Mammary epithelial cell (primary cell): ENCODE measurements at regions of chr9 and their contacts with region 1.

Region 1: GRCh38 chr9:114968671-114969070 is 38.3 kb upstream of the TNFSF8 start:
- DNase-seq: peak; percentile 44
- H3K4me3 ChIP-seq: no peak overlapping the region
- H3K27ac ChIP-seq: no peak overlapping the region
- H3K4me1 ChIP-seq: no peaks in the 10 kb centered on the region
- H3K27me3 ChIP-seq: no peaks in the 10 kb centered on the region
- CTCF ChIP-seq: no peak

Region 2: GRCh38 chr9:115008536-115009270 is 40.0 kb after region 1 on chr9:
- CTCF ChIA-PET with region 1: no interaction called
- dilution Hi-C with region 1: loop called (anchors 5 kb)
- in situ Hi-C with region 1: no loop called
- intact Hi-C with region 1: no loop called
- DNase-seq: peak; percentile 85
- H3K4me3 ChIP-seq: no peak overlapping the region
- H3K27ac ChIP-seq: no peak overlapping the region
- H3K4me1 ChIP-seq: peaks cover 9% of the 10 kb centered on the region
- H3K27me3 ChIP-seq: no peaks in the 10 kb centered on the region
- CTCF ChIP-seq: no peak

Region 3: GRCh38 chr9:115042781-115043509 is 74.3 kb after region 1 on chr9:
- CTCF ChIA-PET with region 1: no interaction called
- dilution Hi-C with region 1: no loop called
- in situ Hi-C with region 1: no loop called
- intact Hi-C with region 1: no loop called
- DNase-seq: peak; percentile 28
- H3K4me3 ChIP-seq: no peak overlapping the region
- H3K27ac ChIP-seq: no peak overlapping the region
- H3K4me1 ChIP-seq: peaks cover 5% of the 10 kb centered on the region
- H3K27me3 ChIP-seq: no peaks in the 10 kb centered on the region
- CTCF ChIP-seq: no peak